CD4-positive, alpha-beta T cell (primary cell): ENCODE measurements at regions of chr7 and their contacts with region 1.

Region 1: DNA sequence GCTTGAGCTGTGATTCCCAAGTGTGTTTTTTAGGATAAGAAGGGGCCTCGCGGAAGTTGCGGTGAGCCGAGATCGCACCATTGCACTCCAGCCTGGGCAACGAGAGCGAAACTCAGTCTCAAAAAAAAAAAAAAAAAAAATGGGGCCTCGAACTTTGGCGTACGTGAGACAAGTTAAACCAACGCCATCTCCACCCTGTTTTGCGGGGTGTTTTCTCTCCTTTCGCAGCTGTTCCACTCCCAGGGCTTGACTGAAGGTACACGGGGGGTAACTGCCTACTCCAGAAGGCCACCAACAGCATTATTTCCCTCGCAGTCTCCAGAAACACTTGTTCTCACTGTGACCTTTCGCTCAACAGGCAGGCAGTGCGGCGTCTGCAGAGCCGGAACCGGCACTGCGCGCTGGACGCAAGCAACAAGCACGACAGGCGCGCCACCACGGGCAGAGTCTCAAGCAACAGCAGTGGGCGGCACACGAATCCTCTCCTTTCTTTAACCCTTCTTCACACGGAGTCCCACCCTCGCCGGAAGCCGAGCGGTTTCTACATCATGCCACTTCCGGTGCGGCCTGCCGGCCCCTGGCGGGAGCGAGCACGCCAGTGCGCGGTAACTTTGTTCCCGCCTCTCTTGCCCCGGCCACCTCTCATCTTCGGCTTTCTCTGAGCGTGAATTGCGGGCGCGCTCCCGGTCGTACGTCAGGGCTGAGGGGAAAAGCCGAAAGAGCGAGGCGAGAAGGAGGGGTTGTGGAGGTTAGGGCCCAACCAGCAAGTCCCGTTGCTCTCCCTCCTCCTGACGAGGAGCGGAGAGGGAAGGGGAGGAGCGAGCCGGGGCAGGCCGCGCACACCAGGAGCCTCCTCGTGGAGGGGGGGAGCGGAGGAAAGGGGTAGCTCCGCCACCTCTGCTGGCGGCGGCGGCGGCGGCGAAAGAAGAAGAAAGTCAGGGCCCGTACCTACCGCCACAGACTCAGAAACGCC is 814 bp upstream of the CDK13 start:
- DNase-seq: peak; percentile 95 to 100 (median 98)
- ATAC-seq: peak; percentile 77
- H3K4me3 ChIP-seq: peak overlapping the region; percentile 93
- H3K4me3 Mint-ChIP-seq: peak overlapping the region; percentile 95
- H3K27ac ChIP-seq: peak overlapping the region; percentile 98 to 99
- H3K27ac Mint-ChIP-seq: peak overlapping the region; percentile 96
- H3K4me1 ChIP-seq: peaks cover 14% of the 10 kb centered on the region
- H3K4me1 Mint-ChIP-seq: peaks cover 44% of the 10 kb centered on the region
- H3K27me3 ChIP-seq: no peaks in the 10 kb centered on the region
- H3K27me3 Mint-ChIP-seq: no peaks in the 10 kb centered on the region
- CTCF ChIP-seq: no peak

Region 2: DNA sequence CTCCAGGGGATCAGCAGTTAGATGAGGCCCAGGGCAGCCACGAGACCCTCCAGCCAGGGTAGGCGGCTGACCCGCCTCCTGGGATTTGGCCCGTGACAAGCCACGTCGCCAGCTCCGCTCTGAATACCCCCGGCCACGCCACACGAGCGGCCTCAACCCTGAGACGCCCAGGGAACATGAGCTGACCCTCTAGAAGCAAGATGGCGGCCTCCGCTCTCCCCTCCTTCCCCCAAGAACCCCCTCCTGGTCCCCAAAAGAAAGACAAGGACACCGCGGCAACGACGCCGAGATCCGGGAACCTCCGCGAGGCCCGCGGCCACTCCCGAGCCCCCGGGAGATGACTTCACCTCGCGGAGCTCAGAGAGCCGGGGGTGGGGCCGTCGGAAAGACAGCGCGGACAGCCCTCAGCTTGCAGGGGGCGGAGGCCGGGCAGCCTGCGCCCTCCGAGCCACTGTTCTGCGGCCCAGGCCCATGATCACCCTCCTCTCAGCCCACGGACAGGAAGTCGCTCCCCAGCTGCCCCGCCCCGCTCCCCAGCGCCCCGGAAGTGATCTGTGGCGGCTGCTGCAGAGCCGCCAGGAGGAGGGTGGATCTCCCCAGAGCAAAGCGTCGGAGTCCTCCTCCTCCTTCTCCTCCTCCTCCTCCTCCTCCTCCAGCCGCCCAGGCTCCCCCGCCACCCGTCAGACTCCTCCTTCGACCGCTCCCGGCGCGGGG is 326.1 kb before region 1 on chr7 and contains the start of gene RALA:
- CTCF ChIA-PET with region 1: no interaction called
- POLR2A ChIA-PET with region 1: interaction called, 16 read pairs
- intact Hi-C with region 1: loop called in 1 of 2 experiments (anchors 2 kb)
- DNase-seq: peak; percentile 82 to 94 (median 88)
- ATAC-seq: peak; percentile 92
- H3K4me3 ChIP-seq: peak within 1 kb of the TSS; percentile 81
- H3K4me3 Mint-ChIP-seq: peak within 1 kb of the TSS; percentile 97
- H3K27ac ChIP-seq: peak within 1 kb of the TSS; percentile 82 to 85
- H3K27ac Mint-ChIP-seq: peak within 1 kb of the TSS; percentile 86
- H3K4me1 ChIP-seq: peaks cover 27% of the 10 kb centered on the region
- H3K4me1 Mint-ChIP-seq: peaks cover 52% of the 10 kb centered on the region
- H3K27me3 ChIP-seq: no peaks in the 10 kb centered on the region
- H3K27me3 Mint-ChIP-seq: no peaks in the 10 kb centered on the region
- CTCF ChIP-seq: no peak
- total RNA-seq, gene RALA: 24.5 to 27.5 TPM

Region 3: GRCh38 chr7:39700932-39701331 is 248.3 kb before region 1 on chr7:
- CTCF ChIA-PET with region 1: no interaction called
- POLR2A ChIA-PET with region 1: no interaction called
- intact Hi-C with region 1: no loop called
- DNase-seq: peak in 3 of 14 experiments; percentile 16 to 47 (median 41)
- ATAC-seq: no peak
- H3K4me3 ChIP-seq: no peak overlapping the region
- H3K4me3 Mint-ChIP-seq: no peak overlapping the region
- H3K27ac ChIP-seq: no peak overlapping the region
- H3K27ac Mint-ChIP-seq: no peak overlapping the region
- H3K4me1 ChIP-seq: no peaks in the 10 kb centered on the region
- H3K4me1 Mint-ChIP-seq: no peaks in the 10 kb centered on the region
- H3K27me3 ChIP-seq: no peaks in the 10 kb centered on the region
- H3K27me3 Mint-ChIP-seq: no peaks in the 10 kb centered on the region
- CTCF ChIP-seq: no peak

Region 4: GRCh38 chr7:39894904-39895303 is 54.3 kb before region 1 on chr7:
- CTCF ChIA-PET with region 1: interaction called, 4 read pairs
- POLR2A ChIA-PET with region 1: interaction called, 29 read pairs
- intact Hi-C with region 1: loop called (anchors 2 kb)
- DNase-seq: no peak
- ATAC-seq: no peak
- H3K4me3 ChIP-seq: no peak overlapping the region
- H3K4me3 Mint-ChIP-seq: no peak overlapping the region
- H3K27ac ChIP-seq: no peak overlapping the region
- H3K27ac Mint-ChIP-seq: no peak overlapping the region
- H3K4me1 ChIP-seq: peaks cover 3% of the 10 kb centered on the region
- H3K4me1 Mint-ChIP-seq: no peaks in the 10 kb centered on the region
- H3K27me3 ChIP-seq: peaks cover 3 to 8% of the 10 kb centered on the region in 2 experiments
- H3K27me3 Mint-ChIP-seq: peaks cover 11% of the 10 kb centered on the region
- CTCF ChIP-seq: no peak

Region 5: GRCh38 chr7:39987476-39988347 is 38.5 kb after region 1 on chr7:
- CTCF ChIA-PET with region 1: interaction called, 7 read pairs
- POLR2A ChIA-PET with region 1: interaction called, 45 read pairs
- intact Hi-C with region 1: loop called (anchors 1 to 2 kb)
- DNase-seq: peak in 8 of 14 experiments; percentile 9 to 67 (median 39)
- ATAC-seq: peak; percentile 94
- H3K4me3 ChIP-seq: no peak overlapping the region
- H3K4me3 Mint-ChIP-seq: peak overlapping the region; percentile 52
- H3K27ac ChIP-seq: no peak overlapping the region
- H3K27ac Mint-ChIP-seq: peak overlapping the region; percentile 74
- H3K4me1 ChIP-seq: peaks cover 23% of the 10 kb centered on the region
- H3K4me1 Mint-ChIP-seq: peaks cover 63% of the 10 kb centered on the region
- H3K27me3 ChIP-seq: no peaks in the 10 kb centered on the region
- H3K27me3 Mint-ChIP-seq: no peaks in the 10 kb centered on the region
- CTCF ChIP-seq: peak; percentile 27

Region 6: GRCh38 chr7:40057292-40057691 is 108.0 kb after region 1 on chr7:
- CTCF ChIA-PET with region 1: interaction called, 18 read pairs
- POLR2A ChIA-PET with region 1: interaction called, 41 read pairs
- intact Hi-C with region 1: loop called (anchors 1 kb)
- DNase-seq: no peak
- ATAC-seq: no peak
- H3K4me3 ChIP-seq: no peak overlapping the region
- H3K4me3 Mint-ChIP-seq: no peak overlapping the region
- H3K27ac ChIP-seq: no peak overlapping the region
- H3K27ac Mint-ChIP-seq: no peak overlapping the region
- H3K4me1 ChIP-seq: no peaks in the 10 kb centered on the region
- H3K4me1 Mint-ChIP-seq: peaks cover 12% of the 10 kb centered on the region
- H3K27me3 ChIP-seq: no peaks in the 10 kb centered on the region
- H3K27me3 Mint-ChIP-seq: no peaks in the 10 kb centered on the region
- CTCF ChIP-seq: no peak